ENCODE measurements at regions of chrX and their contacts with region 1.

Region 1: DNA sequence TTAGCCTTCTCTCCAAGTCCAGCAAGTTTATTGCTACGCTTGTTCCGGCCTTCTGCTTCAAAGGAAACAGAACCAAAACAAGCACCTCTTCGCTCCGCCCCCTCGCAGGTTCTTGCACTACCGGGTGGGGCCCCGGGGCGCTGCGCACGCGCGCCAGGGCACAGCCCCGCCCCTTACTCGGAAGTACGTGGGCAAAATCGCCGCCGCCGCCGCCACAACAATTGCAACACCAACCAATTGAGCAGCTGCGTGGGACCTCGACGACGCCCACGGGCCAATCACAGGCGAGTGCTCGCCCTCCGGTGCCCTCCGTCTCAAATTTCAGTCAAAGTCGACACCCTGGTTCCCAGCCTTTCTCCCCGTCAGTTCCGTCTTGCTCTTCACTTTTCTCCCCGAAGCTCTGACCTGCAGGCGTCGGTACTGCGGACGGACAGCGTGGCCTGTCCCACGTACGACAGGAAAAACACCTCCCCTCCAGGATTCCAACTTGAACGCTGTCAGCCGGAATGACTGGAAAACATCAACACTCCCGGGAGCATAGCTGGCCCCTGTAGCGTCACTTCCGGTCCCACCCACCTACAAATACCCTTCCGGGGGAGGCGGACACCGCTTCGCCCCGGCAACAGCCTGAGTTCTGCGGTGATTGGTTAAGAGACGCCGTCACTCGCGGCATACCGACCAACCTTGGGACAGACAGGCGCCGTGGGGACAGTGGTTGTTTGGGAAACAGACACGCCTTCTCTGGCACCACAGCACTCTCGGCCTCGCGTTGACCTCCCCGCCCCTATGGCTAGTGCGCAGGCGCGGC is 624 bp upstream of the OTUD5 start:
- DNase-seq: peak; percentile 83 to 98 (median 91)
- ATAC-seq: peak; percentile 76
- H3K4me3 ChIP-seq: peak overlapping the region; percentile 75 to 94
- H3K4me3 Mint-ChIP-seq: peak overlapping the region; percentile 99
- H3K27ac ChIP-seq: peak overlapping the region; percentile 100
- H3K27ac Mint-ChIP-seq: peak overlapping the region; percentile 100
- H3K4me1 ChIP-seq: peaks cover 44% of the 10 kb centered on the region
- H3K4me1 Mint-ChIP-seq: peaks cover 39% of the 10 kb centered on the region
- H3K27me3 ChIP-seq: no peaks in the 10 kb centered on the region
- H3K27me3 Mint-ChIP-seq: no peaks in the 10 kb centered on the region
- CTCF ChIP-seq: no peak

Region 2: GRCh38 chrX:48813644-48814043 is 144.4 kb before region 1 on chrX:
- CTCF ChIA-PET with region 1: no interaction called
- POLR2A ChIA-PET with region 1: no interaction called
- intact Hi-C with region 1: no loop called
- DNase-seq: no peak
- ATAC-seq: no peak
- H3K4me3 ChIP-seq: no peak overlapping the region
- H3K4me3 Mint-ChIP-seq: no peak overlapping the region
- H3K27ac ChIP-seq: no peak overlapping the region
- H3K27ac Mint-ChIP-seq: no peak overlapping the region
- H3K4me1 ChIP-seq: no peaks in the 10 kb centered on the region
- H3K4me1 Mint-ChIP-seq: no peaks in the 10 kb centered on the region
- H3K27me3 ChIP-seq: no peaks in the 10 kb centered on the region
- H3K27me3 Mint-ChIP-seq: no peaks in the 10 kb centered on the region
- CTCF ChIP-seq: no peak

Region 3: DNA sequence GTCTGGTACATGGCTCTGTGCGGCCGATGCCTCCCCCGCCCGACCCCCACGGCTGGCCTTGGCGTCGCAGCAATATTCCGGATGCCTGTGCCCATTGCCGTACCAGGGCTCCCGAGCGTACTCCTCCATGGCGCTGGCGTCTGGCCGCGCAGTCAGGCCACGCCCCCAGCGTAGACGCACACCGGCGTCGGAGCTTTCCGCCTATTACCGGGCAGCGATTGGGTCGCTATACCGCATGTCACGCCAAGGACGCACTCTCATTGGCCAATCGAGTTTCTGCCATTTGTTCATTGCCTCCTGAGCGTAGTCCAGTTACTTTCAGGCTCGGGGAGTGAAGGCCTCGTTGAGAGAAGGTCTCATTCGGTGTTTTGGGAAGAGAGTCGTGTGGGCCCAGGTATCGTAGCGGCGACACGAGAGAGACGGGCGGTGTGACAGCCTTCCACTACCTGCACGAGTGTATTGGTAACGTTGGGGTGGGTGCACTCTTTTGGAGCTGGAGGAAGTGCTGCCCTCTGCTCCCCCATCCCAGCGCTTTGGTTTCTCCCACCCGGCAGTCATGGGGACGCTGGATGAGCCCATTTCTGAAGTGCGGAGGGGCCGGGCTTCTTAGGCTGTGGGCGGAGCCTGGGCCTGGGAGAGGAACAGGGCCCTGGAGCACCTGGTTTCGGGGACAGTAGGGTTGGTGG is 60.3 kb before region 1 on chrX and contains the starts of genes PQBP1 and TIMM17B:
- CTCF ChIA-PET with region 1: no interaction called
- POLR2A ChIA-PET with region 1: interaction called, 11 read pairs
- intact Hi-C with region 1: loop called in 1 of 2 experiments (anchors 1 kb)
- DNase-seq: peak; percentile 72 to 96 (median 84)
- ATAC-seq: peak; percentile 86
- H3K4me3 ChIP-seq: peak within 1 kb of the TSS; percentile 87 to 98
- H3K4me3 Mint-ChIP-seq: peak within 1 kb of the TSS; percentile 88
- H3K27ac ChIP-seq: peak within 1 kb of the TSS; percentile 98
- H3K27ac Mint-ChIP-seq: peak within 1 kb of the TSS; percentile 95
- H3K4me1 ChIP-seq: peaks cover 21% of the 10 kb centered on the region
- H3K4me1 Mint-ChIP-seq: peaks cover 29% of the 10 kb centered on the region
- H3K27me3 ChIP-seq: no peaks in the 10 kb centered on the region
- H3K27me3 Mint-ChIP-seq: no peaks in the 10 kb centered on the region
- CTCF ChIP-seq: no peak
- total RNA-seq, gene PQBP1: 79.9 to 82.1 TPM
- total RNA-seq, gene TIMM17B: 35.0 to 37.6 TPM

Region 4: DNA sequence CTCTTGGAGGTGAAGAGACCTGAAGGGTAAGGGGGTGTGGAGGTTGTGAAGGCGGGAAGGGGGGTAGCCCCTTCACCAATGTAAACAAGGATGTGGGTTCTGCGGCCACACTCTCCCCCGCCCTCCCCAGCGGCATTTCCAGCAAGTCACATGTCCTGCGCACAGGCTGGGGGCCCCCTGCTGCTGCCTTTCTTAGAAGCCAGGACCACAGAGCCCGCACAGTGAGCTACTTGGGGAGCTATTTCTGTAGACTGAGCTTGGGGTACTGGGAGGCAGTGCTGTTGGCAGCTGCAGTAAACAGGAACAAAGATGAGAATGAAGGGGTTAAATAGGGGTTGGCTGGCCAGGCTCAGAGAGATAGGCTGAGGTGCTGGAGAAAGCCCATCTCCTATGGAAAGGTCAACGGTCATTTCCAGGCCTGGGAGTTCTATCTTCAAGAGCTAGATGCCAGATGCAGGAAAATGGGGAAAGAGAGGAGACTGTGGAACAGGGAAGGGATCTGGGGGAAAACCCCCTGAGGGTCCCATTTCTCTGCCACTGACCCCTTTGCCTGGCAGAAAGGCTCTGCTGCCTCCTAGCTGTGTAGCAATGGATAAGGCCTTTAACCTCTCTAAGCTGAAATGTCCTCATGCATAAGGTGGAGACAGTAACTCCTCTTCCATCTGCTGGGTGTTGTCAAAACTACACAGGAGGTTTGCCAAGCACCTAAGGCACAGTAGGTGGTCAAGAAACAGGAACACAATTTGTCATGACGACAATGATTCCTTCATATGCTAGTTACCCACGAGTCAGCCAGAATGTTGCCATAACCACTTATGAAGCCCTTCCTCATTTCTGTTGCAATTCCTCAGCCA is 20.8 kb before region 1 on chrX:
- CTCF ChIA-PET with region 1: interaction called, 3 read pairs
- POLR2A ChIA-PET with region 1: interaction called, 67 read pairs
- intact Hi-C with region 1: loop called in 1 of 2 experiments (anchors 2 kb)
- DNase-seq: peak; percentile 79 to 95 (median 89)
- ATAC-seq: peak; percentile 67
- H3K4me3 ChIP-seq: peak overlapping the region; percentile 33 to 45
- H3K4me3 Mint-ChIP-seq: peak overlapping the region; percentile 83
- H3K27ac ChIP-seq: peak overlapping the region; percentile 82 to 89
- H3K27ac Mint-ChIP-seq: peak overlapping the region; percentile 99
- H3K4me1 ChIP-seq: peaks cover 81% of the 10 kb centered on the region
- H3K4me1 Mint-ChIP-seq: peaks cover 76% of the 10 kb centered on the region
- H3K27me3 ChIP-seq: no peaks in the 10 kb centered on the region
- H3K27me3 Mint-ChIP-seq: no peaks in the 10 kb centered on the region
- CTCF ChIP-seq: no peak

Region 5: DNA sequence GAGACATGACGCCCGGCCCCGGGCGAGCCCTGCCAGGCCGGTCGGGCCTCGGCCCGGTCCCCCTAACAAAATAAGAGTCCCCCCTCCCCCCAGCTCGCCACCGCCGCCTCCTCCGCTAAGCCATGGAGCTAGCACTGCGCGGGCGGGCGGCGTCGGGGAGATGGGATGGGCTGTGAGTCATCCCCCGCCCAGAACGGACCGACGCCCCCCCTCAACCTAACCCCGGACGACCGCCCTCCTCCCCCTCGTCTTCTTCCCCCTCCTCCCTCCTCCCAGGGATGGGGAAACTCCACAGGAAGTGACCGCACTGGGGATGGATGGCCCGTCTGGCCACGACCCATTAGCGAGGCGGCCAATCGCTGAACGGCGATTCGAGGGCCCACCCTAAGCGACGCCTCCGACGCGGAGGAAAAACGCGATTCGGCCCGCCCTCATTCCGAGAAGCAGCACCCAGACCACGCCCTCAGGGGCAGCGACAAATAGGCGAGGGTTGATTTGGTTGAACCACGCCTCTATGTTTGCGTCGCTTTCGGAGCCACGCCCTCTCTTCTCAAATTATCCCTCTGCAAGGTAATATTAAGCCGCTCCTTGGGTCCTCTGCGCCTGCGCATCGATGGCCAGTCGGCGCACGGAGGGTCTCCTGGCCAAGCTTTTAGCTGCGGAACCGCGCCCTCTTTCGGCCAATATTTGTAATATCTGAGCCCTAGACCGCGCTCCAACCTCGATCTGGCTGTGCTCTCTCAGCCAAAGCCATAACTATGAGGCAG is 85.4 kb after region 1 on chrX and contains the start of gene TFE3:
- CTCF ChIA-PET with region 1: no interaction called
- POLR2A ChIA-PET with region 1: interaction called, 7 read pairs
- intact Hi-C with region 1: loop called (anchors 1 kb)
- DNase-seq: peak; percentile 88 to 98 (median 93)
- ATAC-seq: peak; percentile 89
- H3K4me3 ChIP-seq: peak within 1 kb of the TSS; percentile 50 to 56
- H3K4me3 Mint-ChIP-seq: peak within 1 kb of the TSS; percentile 84
- H3K27ac ChIP-seq: peak within 1 kb of the TSS; percentile 73 to 92
- H3K27ac Mint-ChIP-seq: peak within 1 kb of the TSS; percentile 93
- H3K4me1 ChIP-seq: peaks cover 21% of the 10 kb centered on the region
- H3K4me1 Mint-ChIP-seq: peaks cover 35% of the 10 kb centered on the region
- H3K27me3 ChIP-seq: no peaks in the 10 kb centered on the region
- H3K27me3 Mint-ChIP-seq: no peaks in the 10 kb centered on the region
- CTCF ChIP-seq: no peak
- total RNA-seq, gene TFE3: 35.7 to 39.7 TPM

Region 6: DNA sequence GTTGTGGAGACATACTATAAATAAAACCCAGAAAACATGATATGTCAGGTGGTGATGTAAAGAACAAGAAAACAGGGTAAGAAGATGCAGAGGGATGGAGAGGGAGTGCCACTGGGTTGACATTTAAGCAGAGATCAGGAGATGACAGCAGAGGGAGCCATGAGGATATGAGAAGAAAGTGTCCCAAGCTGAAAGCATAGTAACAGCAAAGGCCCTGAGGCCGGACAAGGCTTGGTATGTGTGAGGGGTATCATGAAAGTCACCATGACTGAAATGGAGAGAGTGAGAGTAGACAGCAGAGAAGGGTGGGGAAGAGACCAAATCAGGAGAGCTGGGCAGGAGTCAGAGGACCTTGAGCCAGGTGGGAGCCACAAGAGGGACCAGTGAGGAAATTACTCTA is 162.1 kb after region 1 on chrX:
- CTCF ChIA-PET with region 1: no interaction called
- POLR2A ChIA-PET with region 1: no interaction called
- intact Hi-C with region 1: loop called in 1 of 2 experiments (anchors 5 kb)
- DNase-seq: no peak
- ATAC-seq: no peak
- H3K4me3 ChIP-seq: no peak overlapping the region
- H3K4me3 Mint-ChIP-seq: no peak overlapping the region
- H3K27ac ChIP-seq: no peak overlapping the region
- H3K27ac Mint-ChIP-seq: no peak overlapping the region
- H3K4me1 ChIP-seq: peaks cover 26% of the 10 kb centered on the region
- H3K4me1 Mint-ChIP-seq: peaks cover 48% of the 10 kb centered on the region
- H3K27me3 ChIP-seq: no peaks in the 10 kb centered on the region
- H3K27me3 Mint-ChIP-seq: no peaks in the 10 kb centered on the region
- CTCF ChIP-seq: no peak

Region 7: GRCh38 chrX:49269010-49269767 is 311.2 kb after region 1 on chrX:
- CTCF ChIA-PET with region 1: no interaction called
- POLR2A ChIA-PET with region 1: interaction called, 5 read pairs
- intact Hi-C with region 1: loop called in 1 of 2 experiments (anchors 1 kb)
- DNase-seq: peak; percentile 84 to 98 (median 91)
- ATAC-seq: peak; percentile 84
- H3K4me3 ChIP-seq: peak overlapping the region; percentile 71 to 84
- H3K4me3 Mint-ChIP-seq: peak overlapping the region; percentile 94
- H3K27ac ChIP-seq: peak overlapping the region; percentile 100
- H3K27ac Mint-ChIP-seq: peak overlapping the region; percentile 100
- H3K4me1 ChIP-seq: peaks cover 44% of the 10 kb centered on the region
- H3K4me1 Mint-ChIP-seq: peaks cover 50% of the 10 kb centered on the region
- H3K27me3 ChIP-seq: no peaks in the 10 kb centered on the region
- H3K27me3 Mint-ChIP-seq: no peaks in the 10 kb centered on the region
- CTCF ChIP-seq: no peak

Measured in CD8-positive, alpha-beta T cell (primary cell).